ENCODE measurements at regions of chr10 and their contacts with region 1.

Region 1: DNA sequence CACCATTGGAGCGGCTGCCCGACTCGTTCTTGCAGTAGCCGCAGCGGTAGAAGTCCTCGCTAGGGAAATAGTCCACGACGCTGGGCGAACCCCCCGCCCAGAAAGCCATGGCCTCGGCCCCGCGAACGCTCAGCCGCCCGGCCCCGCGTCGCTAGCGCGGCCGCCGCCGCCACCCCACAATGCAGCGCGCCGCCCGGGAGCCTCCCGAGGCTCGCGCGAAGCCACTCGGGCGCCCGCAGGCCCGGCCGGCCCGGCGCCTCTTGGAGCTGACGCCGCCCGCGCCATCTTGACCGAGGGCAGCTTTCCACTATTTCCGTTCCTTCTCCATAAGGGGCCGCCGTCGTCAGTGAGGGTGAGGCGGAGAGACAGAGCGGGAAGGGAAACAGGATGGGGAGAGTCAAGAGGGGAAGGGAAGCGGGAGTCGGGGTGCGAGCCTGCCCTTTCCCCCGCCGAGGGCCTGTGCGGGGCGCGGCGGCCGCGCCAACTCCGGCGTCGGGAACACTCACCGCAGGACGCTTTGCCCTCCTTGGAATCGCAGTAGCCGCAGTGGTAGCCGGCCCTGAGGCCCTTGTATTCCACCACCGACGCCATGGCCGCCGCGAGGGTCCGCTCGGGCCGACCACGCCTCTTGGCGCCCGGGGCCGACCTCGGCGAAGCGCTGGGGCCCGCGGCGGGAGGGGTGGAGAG is at the start of gene ATE1:
- DNase-seq: peak; percentile 92 to 93
- ATAC-seq: peak; percentile 94 to 98 (median 97)
- H3K4me3 ChIP-seq: peak within 1 kb of the TSS; percentile 90 to 100 (median 97)
- H3K27ac ChIP-seq: peak within 1 kb of the TSS; percentile 97 to 100 (median 99)
- H3K4me1 ChIP-seq: peaks cover 0 to 49% (median 33%) of the 10 kb centered on the region in 9 donors
- H3K27me3 ChIP-seq: no peaks in the 10 kb centered on the region
- CTCF ChIP-seq: peak in 5 of 9 donors; percentile 6 to 40 (median 22)
- total RNA-seq, gene ATE1: 36.1 to 57.7 (median 43.2) TPM

Region 2: GRCh38 chr10:121974535-121975294 is 46.7 kb after region 1 on chr10 and contains the start of gene NSMCE4A:
- intact Hi-C with region 1: loop called in 5 of 10 experiments (anchors 5 to 10 kb)
- DNase-seq: peak; percentile 81 to 86
- ATAC-seq: peak; percentile 90 to 96 (median 93)
- H3K4me3 ChIP-seq: peak within 1 kb of the TSS; percentile 67 to 99 (median 88)
- H3K27ac ChIP-seq: peak within 1 kb of the TSS; percentile 91 to 99 (median 98)
- H3K4me1 ChIP-seq: peaks cover 0 to 30% (median 23%) of the 10 kb centered on the region in 9 donors
- H3K27me3 ChIP-seq: no peaks in the 10 kb centered on the region
- CTCF ChIP-seq: peak in 4 of 9 donors; percentile 66 to 87 (median 76)
- total RNA-seq, gene NSMCE4A: 18.2 to 35.4 (median 24.4) TPM

Region 3: GRCh38 chr10:121988356-121989316 is 60.7 kb after region 1 on chr10 and contains the start of gene TACC2:
- intact Hi-C with region 1: no loop called
- DNase-seq: no peak
- ATAC-seq: peak in 2 of 8 donors; percentile 24 to 76
- H3K4me3 ChIP-seq: no peak within 1 kb of the TSS
- H3K27ac ChIP-seq: peak within 1 kb of the TSS in 8 of 10 donors; percentile 0 to 62 (median 36)
- H3K4me1 ChIP-seq: peaks cover 0 to 19% (median 9%) of the 10 kb centered on the region in 9 donors
- H3K27me3 ChIP-seq: no peaks in the 10 kb centered on the region
- CTCF ChIP-seq: no peak
- total RNA-seq, gene TACC2: 266 to 451 (median 378) TPM

Region 4: GRCh38 chr10:122062831-122063674 is 135.1 kb after region 1 on chr10:
- intact Hi-C with region 1: loop called in 1 of 10 experiments (anchors 10 kb)
- DNase-seq: peak; percentile 80 to 85
- ATAC-seq: peak; percentile 94 to 100 (median 97)
- H3K4me3 ChIP-seq: no peak overlapping the region
- H3K27ac ChIP-seq: peak overlapping the region; percentile 74 to 91 (median 84)
- H3K4me1 ChIP-seq: peaks cover 6 to 40% (median 15%) of the 10 kb centered on the region in 9 donors
- H3K27me3 ChIP-seq: no peaks in the 10 kb centered on the region
- CTCF ChIP-seq: no peak

Measured in heart right ventricle (tissue), 16 donors.